ENCODE measurements at regions of chr11 and their contacts with region 1.

Region 1: GRCh38 chr11:506238-506994 is 626 bp downstream of the RNH1 start:
- DNase-seq: peak; percentile 98
- H3K4me3 ChIP-seq: peak overlapping the region; percentile 95
- H3K27ac ChIP-seq: peak overlapping the region; percentile 85
- H3K4me1 ChIP-seq: peaks cover 32% of the 10 kb centered on the region
- CTCF ChIP-seq: no peak

Region 2: GRCh38 chr11:363948-364761 is 142.3 kb before region 1 on chr11:
- CTCF ChIA-PET with region 1: no interaction called
- POLR2A ChIA-PET with region 1: no interaction called
- intact Hi-C with region 1: no loop called
- DNase-seq: peak; percentile 74
- H3K4me3 ChIP-seq: no peak overlapping the region
- H3K27ac ChIP-seq: no peak overlapping the region
- H3K4me1 ChIP-seq: no peaks in the 10 kb centered on the region
- CTCF ChIP-seq: peak; percentile 82

Region 3: DNA sequence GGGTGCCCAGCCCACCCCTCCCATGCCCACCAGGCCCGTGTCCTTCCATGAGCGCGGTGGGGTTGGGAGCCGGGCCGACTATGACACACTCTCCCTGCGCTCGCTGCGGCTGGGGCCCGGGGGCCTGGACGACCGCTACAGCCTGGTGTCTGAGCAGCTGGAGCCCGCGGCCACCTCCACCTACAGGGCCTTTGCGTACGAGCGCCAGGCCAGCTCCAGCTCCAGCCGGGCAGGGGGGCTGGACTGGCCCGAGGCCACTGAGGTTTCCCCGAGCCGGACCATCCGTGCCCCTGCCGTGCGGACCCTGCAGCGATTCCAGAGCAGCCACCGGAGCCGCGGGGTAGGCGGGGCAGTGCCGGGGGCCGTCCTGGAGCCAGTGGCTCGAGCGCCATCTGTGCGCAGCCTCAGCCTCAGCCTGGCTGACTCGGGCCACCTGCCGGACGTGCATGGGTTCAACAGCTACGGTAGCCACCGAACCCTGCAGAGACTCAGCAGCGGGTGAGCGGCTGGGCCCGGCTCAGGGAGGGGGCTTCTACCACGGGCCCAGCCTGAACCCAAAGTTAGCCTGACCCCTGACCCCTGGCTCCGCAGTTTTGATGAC is 109.4 kb before region 1 on chr11:
- CTCF ChIA-PET with region 1: no interaction called
- POLR2A ChIA-PET with region 1: no interaction called
- intact Hi-C with region 1: no loop called
- DNase-seq: no peak
- H3K4me3 ChIP-seq: no peak overlapping the region
- H3K27ac ChIP-seq: no peak overlapping the region
- H3K4me1 ChIP-seq: no peaks in the 10 kb centered on the region
- CTCF ChIP-seq: no peak

Region 4: GRCh38 chr11:494761-495536 is 11.5 kb before region 1 on chr11:
- CTCF ChIA-PET with region 1: no interaction called
- POLR2A ChIA-PET with region 1: no interaction called
- intact Hi-C with region 1: no loop called
- DNase-seq: no peak
- H3K4me3 ChIP-seq: no peak overlapping the region
- H3K27ac ChIP-seq: no peak overlapping the region
- H3K4me1 ChIP-seq: peaks cover 15% of the 10 kb centered on the region
- CTCF ChIP-seq: no peak

Region 5: DNA sequence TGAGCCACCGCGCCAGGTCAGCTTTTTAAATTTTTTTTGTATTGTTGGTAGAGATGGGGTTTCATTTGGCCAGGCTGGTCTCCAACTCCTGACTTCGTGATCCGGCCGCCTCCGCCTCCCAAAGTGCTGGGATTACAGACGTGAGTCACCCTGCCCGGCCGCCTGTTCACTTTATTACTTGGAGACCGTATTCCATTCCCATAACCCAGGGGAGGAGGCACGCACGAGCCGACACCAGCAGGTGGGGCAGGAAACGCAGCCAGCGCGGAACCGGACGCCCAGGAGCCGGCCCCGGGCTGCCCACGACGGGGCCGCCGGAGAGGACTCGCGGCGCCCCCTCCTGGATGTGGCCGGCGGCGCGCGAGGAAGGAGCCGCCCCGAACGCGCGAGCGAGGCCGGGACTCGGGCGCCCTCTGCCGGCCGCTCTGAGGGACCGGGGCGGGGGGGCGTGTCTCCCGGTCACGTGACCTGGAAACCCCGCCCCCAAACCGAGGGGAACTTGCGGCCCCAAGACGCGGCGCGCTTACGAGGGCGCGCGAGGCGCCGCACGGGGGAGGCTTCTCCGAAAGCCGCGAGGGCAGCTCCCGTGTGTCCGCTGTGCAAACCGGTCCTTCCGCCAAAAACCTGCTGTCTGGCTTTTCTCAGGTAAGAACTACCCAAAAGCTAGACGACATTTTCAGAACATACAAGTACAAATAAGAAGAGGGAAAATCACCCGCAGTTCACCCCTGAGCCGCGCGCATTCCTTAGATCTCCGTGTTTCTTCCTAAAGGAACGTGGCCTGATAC is 12.2 kb after region 1 on chr11:
- CTCF ChIA-PET with region 1: no interaction called
- POLR2A ChIA-PET with region 1: no interaction called
- intact Hi-C with region 1: loop called (anchors 1 kb)
- DNase-seq: peak; percentile 80
- H3K4me3 ChIP-seq: peak overlapping the region; percentile 28
- H3K27ac ChIP-seq: no peak overlapping the region
- H3K4me1 ChIP-seq: no peaks in the 10 kb centered on the region
- CTCF ChIP-seq: peak; percentile 99

Region 6: GRCh38 chr11:535519-536454 is 29.4 kb after region 1 on chr11 and contains the start of gene HRAS:
- CTCF ChIA-PET with region 1: interaction called, 11 read pairs
- POLR2A ChIA-PET with region 1: interaction called, 6 read pairs
- intact Hi-C with region 1: loop called (anchors 1 kb)
- DNase-seq: peak; percentile 97
- H3K4me3 ChIP-seq: peak within 1 kb of the TSS; percentile 94
- H3K27ac ChIP-seq: peak within 1 kb of the TSS; percentile 80
- H3K4me1 ChIP-seq: peaks cover 32% of the 10 kb centered on the region
- CTCF ChIP-seq: no peak
- total RNA-seq, gene HRAS: 53.0 and 67.8 TPM in 2 replicates

Region 7: GRCh38 chr11:910589-911195 is 404.3 kb after region 1 on chr11 and contains the start of gene CHID1:
- CTCF ChIA-PET with region 1: no interaction called
- POLR2A ChIA-PET with region 1: no interaction called
- intact Hi-C with region 1: loop called (anchors 5 kb)
- DNase-seq: peak; percentile 89
- H3K4me3 ChIP-seq: peak within 1 kb of the TSS; percentile 88
- H3K27ac ChIP-seq: peak within 1 kb of the TSS; percentile 44
- H3K4me1 ChIP-seq: peaks cover 35% of the 10 kb centered on the region
- CTCF ChIP-seq: no peak
- total RNA-seq, gene CHID1: 30.6 and 39.4 TPM in 2 replicates